CD8-positive, alpha-beta T cell (primary cell): ENCODE measurements at regions of chr2 and their contacts with region 1.

Region 1: DNA sequence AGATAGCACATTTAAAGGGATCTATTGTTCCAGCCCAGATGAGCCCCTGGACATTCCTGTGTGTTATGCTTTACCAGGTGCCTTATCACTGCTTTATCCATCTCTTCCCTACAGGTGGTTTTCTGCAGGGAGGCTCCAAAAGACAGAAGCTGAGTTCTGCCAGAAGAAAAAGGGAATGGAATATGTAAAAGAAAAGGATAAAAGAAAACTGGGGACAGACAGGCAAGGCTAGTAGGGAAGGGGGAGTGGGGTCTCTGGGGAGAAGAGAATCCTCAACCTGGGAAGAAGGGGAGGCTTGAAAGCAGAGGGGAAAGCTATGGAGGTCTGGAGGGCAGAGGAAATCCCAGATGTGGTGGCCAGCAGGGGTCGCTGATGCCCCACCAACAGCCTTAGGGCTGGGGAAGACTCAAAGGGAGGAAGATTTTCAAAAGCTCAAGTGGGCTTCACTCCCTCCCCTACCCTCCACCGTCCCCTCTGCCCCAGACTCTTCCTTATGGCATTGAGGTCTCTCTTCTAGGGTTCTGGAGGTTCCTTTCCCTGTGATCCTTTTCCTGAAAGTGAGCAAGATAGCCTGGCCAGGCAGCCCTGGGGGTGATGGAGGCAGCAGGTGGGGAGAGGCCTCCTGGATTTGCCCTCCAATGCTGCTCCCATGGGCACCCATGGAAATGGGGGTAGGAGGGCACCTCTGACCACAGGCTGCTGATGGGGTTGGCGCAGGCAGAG is 178.1 kb upstream of the PKDCC start:
- DNase-seq: peak; percentile 44 to 83 (median 75)
- ATAC-seq: peak; percentile 83
- H3K4me3 ChIP-seq: no peak overlapping the region
- H3K4me3 Mint-ChIP-seq: no peak overlapping the region
- H3K27ac ChIP-seq: no peak overlapping the region
- H3K27ac Mint-ChIP-seq: no peak overlapping the region
- H3K4me1 ChIP-seq: no peaks in the 10 kb centered on the region
- H3K4me1 Mint-ChIP-seq: peaks cover 19% of the 10 kb centered on the region
- H3K27me3 ChIP-seq: no peaks in the 10 kb centered on the region
- H3K27me3 Mint-ChIP-seq: peaks cover 5% of the 10 kb centered on the region
- CTCF ChIP-seq: peak; percentile 76

Region 2: DNA sequence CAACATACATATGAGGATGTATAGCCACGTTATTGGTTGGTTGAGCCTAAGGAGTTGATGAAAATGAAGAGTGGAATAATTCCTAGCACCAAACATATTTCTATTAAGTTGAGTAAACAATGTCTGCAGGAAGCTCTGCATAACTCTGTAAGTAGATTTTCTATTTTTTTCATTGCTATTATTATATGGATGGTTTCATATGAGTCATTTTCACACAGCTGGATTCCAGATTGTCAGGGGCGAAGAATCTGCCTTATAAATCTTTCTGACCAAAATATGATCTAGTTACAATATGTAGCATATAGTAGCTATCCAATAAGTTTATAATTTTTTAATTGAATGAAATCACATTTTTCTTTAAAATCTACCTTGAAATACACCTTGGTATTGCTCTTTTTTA is 289.9 kb before region 1 on chr2:
- CTCF ChIA-PET with region 1: no interaction called
- POLR2A ChIA-PET with region 1: no interaction called
- intact Hi-C with region 1: no loop called
- DNase-seq: no peak
- ATAC-seq: no peak
- H3K4me3 ChIP-seq: no peak overlapping the region
- H3K4me3 Mint-ChIP-seq: no peak overlapping the region
- H3K27ac ChIP-seq: no peak overlapping the region
- H3K27ac Mint-ChIP-seq: no peak overlapping the region
- H3K4me1 ChIP-seq: no peaks in the 10 kb centered on the region
- H3K4me1 Mint-ChIP-seq: no peaks in the 10 kb centered on the region
- H3K27me3 ChIP-seq: no peaks in the 10 kb centered on the region
- H3K27me3 Mint-ChIP-seq: no peaks in the 10 kb centered on the region
- CTCF ChIP-seq: no peak

Region 3: GRCh38 chr2:41840702-41841551 is 28.8 kb before region 1 on chr2:
- CTCF ChIA-PET with region 1: interaction called, 13 read pairs
- POLR2A ChIA-PET with region 1: interaction called, 7 read pairs
- intact Hi-C with region 1: loop called in 1 of 2 experiments (anchors 1 kb)
- DNase-seq: peak; percentile 94 to 98 (median 97)
- ATAC-seq: peak; percentile 97
- H3K4me3 ChIP-seq: peak overlapping the region; percentile 74 to 81
- H3K4me3 Mint-ChIP-seq: peak overlapping the region; percentile 95
- H3K27ac ChIP-seq: peak overlapping the region; percentile 77 to 82
- H3K27ac Mint-ChIP-seq: peak overlapping the region; percentile 96
- H3K4me1 ChIP-seq: peaks cover 11% of the 10 kb centered on the region
- H3K4me1 Mint-ChIP-seq: peaks cover 14% of the 10 kb centered on the region
- H3K27me3 ChIP-seq: peaks cover 0 to 1% of the 10 kb centered on the region in 2 experiments
- H3K27me3 Mint-ChIP-seq: peaks cover 17% of the 10 kb centered on the region
- CTCF ChIP-seq: peak; percentile 95

Region 4: GRCh38 chr2:42086500-42086953 is 216.8 kb after region 1 on chr2:
- CTCF ChIA-PET with region 1: interaction called, 366 read pairs
- POLR2A ChIA-PET with region 1: no interaction called
- intact Hi-C with region 1: loop called (anchors 1 kb)
- DNase-seq: peak in 4 of 9 experiments; percentile 27 to 74 (median 48)
- ATAC-seq: peak; percentile 78
- H3K4me3 ChIP-seq: no peak overlapping the region
- H3K4me3 Mint-ChIP-seq: no peak overlapping the region
- H3K27ac ChIP-seq: no peak overlapping the region
- H3K27ac Mint-ChIP-seq: no peak overlapping the region
- H3K4me1 ChIP-seq: no peaks in the 10 kb centered on the region
- H3K4me1 Mint-ChIP-seq: peaks cover 8% of the 10 kb centered on the region
- H3K27me3 ChIP-seq: no peaks in the 10 kb centered on the region
- H3K27me3 Mint-ChIP-seq: peaks cover 3% of the 10 kb centered on the region
- CTCF ChIP-seq: peak; percentile 62

Region 5: GRCh38 chr2:42153944-42154581 is 284.4 kb after region 1 on chr2:
- CTCF ChIA-PET with region 1: no interaction called
- POLR2A ChIA-PET with region 1: no interaction called
- intact Hi-C with region 1: no loop called
- DNase-seq: no peak
- ATAC-seq: no peak
- H3K4me3 ChIP-seq: no peak overlapping the region
- H3K4me3 Mint-ChIP-seq: no peak overlapping the region
- H3K27ac ChIP-seq: no peak overlapping the region
- H3K27ac Mint-ChIP-seq: no peak overlapping the region
- H3K4me1 ChIP-seq: no peaks in the 10 kb centered on the region
- H3K4me1 Mint-ChIP-seq: no peaks in the 10 kb centered on the region
- H3K27me3 ChIP-seq: no peaks in the 10 kb centered on the region
- H3K27me3 Mint-ChIP-seq: no peaks in the 10 kb centered on the region
- CTCF ChIP-seq: no peak

Region 6: DNA sequence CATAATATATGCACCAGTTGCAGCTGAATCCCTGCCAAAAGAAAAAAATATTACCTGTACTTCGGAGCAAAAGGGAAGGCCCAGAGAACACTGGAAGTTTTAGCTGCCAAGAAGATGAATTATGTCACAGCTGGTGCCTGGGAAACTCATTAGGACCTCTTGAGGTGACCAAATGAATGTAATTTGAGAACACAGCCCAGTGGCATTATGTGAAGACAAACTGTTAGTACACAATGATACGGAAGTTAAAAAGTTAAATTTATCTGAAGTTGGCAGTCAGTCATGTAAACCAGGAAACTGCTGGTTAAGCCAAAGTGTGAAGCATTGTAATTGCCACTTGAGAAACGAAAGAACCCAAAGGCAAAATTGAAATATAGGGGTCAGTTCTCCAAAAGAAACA is 380.2 kb after region 1 on chr2:
- CTCF ChIA-PET with region 1: no interaction called
- POLR2A ChIA-PET with region 1: no interaction called
- intact Hi-C with region 1: loop called in 1 of 2 experiments (anchors 10 kb)
- DNase-seq: peak in 1 of 9 experiments; percentile 20
- ATAC-seq: no peak
- H3K4me3 ChIP-seq: no peak overlapping the region
- H3K4me3 Mint-ChIP-seq: no peak overlapping the region
- H3K27ac ChIP-seq: peak overlapping the region in 1 of 2 experiments; percentile 40
- H3K27ac Mint-ChIP-seq: no peak overlapping the region
- H3K4me1 ChIP-seq: peaks cover 31% of the 10 kb centered on the region
- H3K4me1 Mint-ChIP-seq: peaks cover 76% of the 10 kb centered on the region
- H3K27me3 ChIP-seq: no peaks in the 10 kb centered on the region
- H3K27me3 Mint-ChIP-seq: no peaks in the 10 kb centered on the region
- CTCF ChIP-seq: no peak

Region 7: GRCh38 chr2:42828487-42829425 is 959.1 kb after region 1 on chr2:
- CTCF ChIA-PET with region 1: no interaction called
- POLR2A ChIA-PET with region 1: no interaction called
- intact Hi-C with region 1: loop called in 1 of 2 experiments (anchors 5 kb)
- DNase-seq: peak; percentile 34 to 84 (median 70)
- ATAC-seq: peak; percentile 97
- H3K4me3 ChIP-seq: no peak overlapping the region
- H3K4me3 Mint-ChIP-seq: no peak overlapping the region
- H3K27ac ChIP-seq: no peak overlapping the region
- H3K27ac Mint-ChIP-seq: no peak overlapping the region
- H3K4me1 ChIP-seq: peaks cover 9% of the 10 kb centered on the region
- H3K4me1 Mint-ChIP-seq: peaks cover 17% of the 10 kb centered on the region
- H3K27me3 ChIP-seq: peaks cover 0 to 2% of the 10 kb centered on the region in 2 experiments
- H3K27me3 Mint-ChIP-seq: peaks cover 1% of the 10 kb centered on the region
- CTCF ChIP-seq: peak; percentile 88